Activated CD4-positive, alpha-beta T cell treated with anti-CD3 and anti-CD28 coated beads, Interleukin-2, amount 10 ng/mL, durations not matched to agents 7 days and 5 days (primary cell): ENCODE measurements at regions of chr20 and their contacts with region 1.

Region 1: DNA sequence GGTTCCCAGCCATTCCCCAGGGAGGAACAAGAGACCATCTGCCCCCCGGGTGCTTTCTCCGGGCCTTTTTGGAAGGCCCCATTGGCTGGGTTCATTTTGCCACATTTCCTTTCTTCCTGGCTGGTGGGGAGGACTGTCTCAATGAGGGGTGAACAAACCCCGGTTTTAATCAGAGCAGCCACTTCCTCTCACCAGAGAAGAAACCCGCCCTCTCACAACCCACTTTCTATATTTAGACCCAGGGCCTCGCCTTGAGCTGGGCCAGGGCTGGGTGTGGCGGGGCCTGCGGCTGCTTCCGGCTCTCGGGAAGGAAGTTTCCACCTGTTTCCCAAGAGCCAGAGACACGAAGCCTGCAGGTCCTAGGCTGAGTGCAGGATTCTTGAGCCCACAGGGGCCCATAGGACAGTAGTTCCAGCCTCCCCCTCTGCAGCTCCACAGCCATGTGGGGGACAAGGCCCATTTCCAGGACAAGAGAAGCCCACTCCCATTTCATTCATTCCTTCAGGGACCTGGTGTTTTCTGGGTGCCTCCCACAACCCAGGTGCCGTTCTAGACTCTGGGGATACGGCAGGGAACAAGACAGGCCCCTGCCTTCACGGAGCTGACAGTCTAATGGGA is 41.8 kb downstream of the RBM38 start:
- DNase-seq: peak; percentile 88
- H3K4me3 Mint-ChIP-seq: peak overlapping the region; percentile 32
- H3K27ac Mint-ChIP-seq: peak overlapping the region; percentile 95
- H3K4me1 Mint-ChIP-seq: peaks cover 73% of the 10 kb centered on the region
- H3K27me3 Mint-ChIP-seq: no peaks in the 10 kb centered on the region

Region 2: DNA sequence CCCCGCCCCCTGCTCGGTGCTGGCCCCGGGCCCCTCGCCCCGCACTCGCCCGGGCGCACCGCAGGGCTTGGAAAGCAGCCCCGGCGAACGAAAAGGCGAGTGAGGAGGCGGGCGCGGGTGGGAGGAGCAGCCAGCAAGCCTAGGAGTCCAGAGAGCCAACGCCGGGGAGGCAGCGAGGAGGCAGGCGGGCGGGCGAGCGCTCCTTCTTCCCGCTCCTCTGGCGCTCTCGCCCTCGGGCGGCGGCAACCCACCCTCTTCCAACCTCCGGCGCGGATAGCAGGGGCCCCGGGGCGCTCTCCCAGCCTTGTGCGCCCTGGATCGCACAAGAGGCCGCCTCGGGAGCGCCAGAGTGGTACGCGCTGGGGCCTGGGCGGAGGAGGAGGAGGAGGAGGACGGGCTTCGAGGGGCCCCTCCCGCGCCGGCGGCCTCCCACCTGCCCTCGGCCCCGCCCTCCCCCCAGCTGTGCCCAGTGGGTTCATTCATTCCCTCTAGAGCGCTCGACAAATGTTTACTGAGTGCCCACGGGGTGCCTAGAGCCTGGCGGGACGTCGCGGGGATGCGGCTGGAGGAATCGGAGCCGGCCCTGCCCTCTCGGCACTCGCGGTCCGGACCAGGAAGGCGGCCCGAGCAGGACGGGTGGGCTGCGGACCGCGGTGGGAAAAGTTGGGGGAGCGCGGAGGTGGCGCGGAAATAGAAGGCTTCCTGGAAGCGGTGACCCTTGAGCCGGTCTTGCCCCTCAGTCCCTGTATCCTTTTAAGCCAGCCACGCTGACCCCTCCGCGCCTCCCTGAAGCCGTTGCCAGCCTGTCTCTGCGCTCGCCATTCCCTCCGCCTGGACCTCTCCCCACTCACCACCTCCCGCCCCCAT is 166.5 kb before region 1 on chr20 and contains the start of gene BMP7:
- CTCF ChIA-PET with region 1: no interaction called
- POLR2A ChIA-PET with region 1: no interaction called
- DNase-seq: no peak
- H3K4me3 Mint-ChIP-seq: no peak within 1 kb of the TSS
- H3K27ac Mint-ChIP-seq: no peak within 1 kb of the TSS
- H3K4me1 Mint-ChIP-seq: peaks cover 3% of the 10 kb centered on the region
- H3K27me3 Mint-ChIP-seq: peaks cover 86% of the 10 kb centered on the region
- total RNA-seq, gene BMP7: not detected

Region 3: DNA sequence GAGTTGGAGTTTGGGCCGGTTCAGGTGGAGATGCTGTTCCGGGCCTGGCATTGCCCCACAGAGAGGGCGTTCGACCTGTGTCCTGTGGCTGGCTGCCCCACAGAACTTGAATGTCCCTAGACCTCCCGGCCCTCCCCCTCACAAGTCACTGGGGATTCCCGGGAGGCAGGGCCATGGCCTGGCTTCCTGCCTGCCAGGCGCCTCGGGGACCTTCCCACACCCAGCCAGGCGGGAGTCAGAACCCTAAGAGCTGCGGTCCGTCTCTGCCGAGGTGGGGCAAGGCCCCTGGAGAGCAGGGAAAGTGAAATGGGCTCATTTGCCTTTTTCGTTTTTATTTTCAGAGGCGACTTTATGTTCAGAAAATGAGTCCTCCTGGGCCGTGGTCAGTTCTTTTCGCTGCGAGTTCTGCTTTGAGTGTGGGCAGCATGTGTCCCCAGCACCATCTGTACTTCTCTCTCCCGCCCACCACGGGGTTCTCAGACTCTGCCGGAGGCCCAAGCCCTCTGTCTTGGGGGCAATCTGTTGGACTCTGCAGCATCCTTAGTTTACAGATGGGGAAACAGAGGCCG is 33.3 kb before region 1 on chr20:
- CTCF ChIA-PET with region 1: interaction called, 10 read pairs
- POLR2A ChIA-PET with region 1: interaction called, 4 read pairs
- DNase-seq: no peak
- H3K4me3 Mint-ChIP-seq: peak overlapping the region; percentile 79
- H3K27ac Mint-ChIP-seq: peak overlapping the region; percentile 97
- H3K4me1 Mint-ChIP-seq: peaks cover 92% of the 10 kb centered on the region
- H3K27me3 Mint-ChIP-seq: no peaks in the 10 kb centered on the region

Region 4: DNA sequence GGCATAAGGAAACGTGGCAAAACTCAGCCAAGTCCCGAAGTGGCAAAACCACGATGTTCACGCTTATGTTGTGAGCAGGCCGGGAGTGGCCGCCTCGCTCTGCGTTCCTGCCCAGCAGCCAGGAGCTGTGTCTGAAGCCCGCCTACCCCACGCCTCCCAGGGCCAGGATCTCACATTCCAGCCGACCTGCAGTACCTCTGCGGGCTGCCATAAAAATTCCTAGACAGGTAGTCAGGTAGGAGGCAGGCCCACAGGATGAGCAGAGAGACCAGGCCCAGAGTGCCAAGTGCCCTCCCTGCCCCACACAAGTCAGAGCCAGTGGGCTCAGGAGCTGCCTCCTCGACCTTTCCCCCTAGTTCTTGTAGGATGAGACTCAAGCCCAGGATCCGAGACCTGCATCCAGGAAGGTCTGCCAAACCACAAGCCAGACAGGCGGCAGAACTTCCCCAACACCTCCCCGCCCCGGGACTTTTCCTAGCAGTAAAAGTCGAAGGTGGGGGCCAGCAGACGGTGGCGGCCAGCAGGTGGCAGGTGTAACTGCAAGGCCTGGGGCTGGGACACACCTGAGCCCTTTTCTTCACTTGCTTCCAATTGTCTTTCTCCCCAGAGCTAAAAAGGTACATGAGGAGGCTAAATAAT is 260.1 kb after region 1 on chr20:
- CTCF ChIA-PET with region 1: no interaction called
- POLR2A ChIA-PET with region 1: no interaction called
- DNase-seq: no peak
- H3K4me3 Mint-ChIP-seq: no peak overlapping the region
- H3K27ac Mint-ChIP-seq: no peak overlapping the region
- H3K4me1 Mint-ChIP-seq: peaks cover 3% of the 10 kb centered on the region
- H3K27me3 Mint-ChIP-seq: no peaks in the 10 kb centered on the region